Panc1 (cell line): ENCODE measurements at regions of chr17 and their contacts with region 1.

Region 1: DNA sequence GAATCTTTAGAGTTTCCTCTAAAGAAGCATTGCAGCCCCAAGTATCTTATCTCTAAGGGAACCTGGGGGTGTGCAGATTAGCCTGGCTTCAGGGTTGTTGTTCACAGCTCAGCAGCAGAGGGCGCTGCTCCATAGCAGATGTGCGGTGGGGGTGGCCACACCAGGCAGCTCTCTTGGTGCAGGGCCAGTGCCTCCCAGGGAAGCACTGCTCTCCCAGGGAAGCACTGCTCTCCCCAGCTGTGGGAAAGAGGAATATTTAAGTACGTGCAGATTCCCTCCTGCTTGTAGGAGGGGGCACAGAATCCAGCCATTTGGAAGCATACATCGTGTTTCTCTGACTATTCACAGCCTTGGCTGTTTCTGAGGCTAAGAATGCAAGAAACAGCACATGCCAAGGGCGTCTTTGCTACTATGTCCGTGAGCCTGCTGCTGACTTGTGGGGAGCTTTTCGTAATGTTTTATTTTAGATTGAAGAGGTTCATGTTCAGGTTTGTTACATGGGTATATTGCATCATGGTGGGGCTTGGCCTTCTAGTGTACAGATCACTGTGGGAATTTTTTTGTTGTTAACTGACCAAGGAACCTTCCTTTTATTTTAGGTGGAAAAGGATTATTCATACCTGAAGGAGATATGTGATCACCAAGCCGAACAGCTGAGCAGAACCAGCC is 217.8 kb downstream of the SPECC1 start:
- DNase-seq: no peak
- ATAC-seq: peak; percentile 91
- H3K4me3 ChIP-seq: no peak overlapping the region
- H3K27ac ChIP-seq: no peak overlapping the region
- H3K4me1 ChIP-seq: peaks cover 7% of the 10 kb centered on the region
- H3K27me3 ChIP-seq: no peaks in the 10 kb centered on the region
- CTCF ChIP-seq: peak; percentile 88

Region 2: GRCh38 chr17:20273741-20274500 is 47.0 kb after region 1 on chr17:
- CTCF ChIA-PET with region 1: no interaction called
- POLR2A ChIA-PET with region 1: no interaction called
- in situ Hi-C with region 1: no loop called
- intact Hi-C with region 1: loop called (anchors 2 kb)
- DNase-seq: no peak
- ATAC-seq: no peak
- H3K4me3 ChIP-seq: no peak overlapping the region
- H3K27ac ChIP-seq: no peak overlapping the region
- H3K4me1 ChIP-seq: no peaks in the 10 kb centered on the region
- H3K27me3 ChIP-seq: no peaks in the 10 kb centered on the region
- CTCF ChIP-seq: no peak